Adrenal gland (tissue), 19 donors: ENCODE measurements at regions of chr1 and their contacts with region 1.

Region 1: DNA sequence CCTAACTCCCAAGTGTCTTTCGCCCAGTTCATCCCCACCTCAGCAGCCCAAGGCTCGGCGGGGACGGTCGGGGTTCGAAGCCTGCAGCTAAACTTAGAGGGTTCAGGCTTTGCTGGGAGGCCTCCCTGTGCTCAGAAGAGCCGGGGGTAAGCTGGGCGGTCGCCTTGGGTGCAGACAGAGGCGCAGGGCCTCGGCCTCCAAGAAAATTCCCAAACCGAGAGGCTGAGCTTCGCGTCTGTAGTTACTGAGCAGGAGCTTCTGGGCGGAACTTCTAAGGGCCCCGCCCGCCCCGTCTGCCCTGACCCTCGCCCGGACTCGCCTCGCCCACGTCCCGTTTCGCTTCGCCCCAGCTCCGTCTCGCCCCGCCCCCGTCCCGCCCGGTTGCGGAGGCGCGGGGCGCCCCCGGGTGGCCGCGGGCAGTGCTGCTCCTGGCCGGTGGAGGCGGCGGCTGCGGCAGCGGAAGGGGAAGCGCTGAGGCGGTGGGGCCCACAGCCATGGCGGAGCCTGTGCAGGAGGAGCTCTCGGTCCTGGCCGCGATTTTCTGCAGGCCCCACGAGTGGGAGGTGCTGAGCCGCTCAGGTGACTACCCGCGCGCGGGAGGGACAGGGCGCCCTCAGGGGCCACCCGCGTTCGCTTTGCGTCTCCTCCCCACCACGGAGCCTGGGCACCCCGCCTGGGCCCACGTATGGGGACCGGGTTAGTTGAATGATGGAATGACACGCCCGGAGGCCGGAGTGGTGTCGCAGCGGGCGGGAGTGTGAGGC is at the start of gene RWDD3:
- DNase-seq: peak; percentile 92 to 95 (median 94)
- H3K4me3 ChIP-seq: peak within 1 kb of the TSS; percentile 78 to 96 (median 87)
- H3K27ac ChIP-seq: peak within 1 kb of the TSS; percentile 20 to 90 (median 78)
- H3K4me1 ChIP-seq: peaks cover 0 to 41% of the 10 kb centered on the region in 2 donors
- H3K27me3 ChIP-seq: no peaks in the 10 kb centered on the region
- CTCF ChIP-seq: peak; percentile 23 to 98 (median 72)
- POLR2A ChIP-seq: peak; percentile 39 to 70
- total RNA-seq, gene RWDD3: 2.9 to 29.3 (median 12.0) TPM

Region 2: GRCh38 chr1:95072532-95073419 is 161.1 kb before region 1 on chr1 and contains the start of gene ALG14:
- intact Hi-C with region 1: loop called in 1 of 2 experiments (anchors 5 kb)
- DNase-seq: peak; percentile 95 to 98 (median 96)
- H3K4me3 ChIP-seq: peak within 1 kb of the TSS; percentile 4 to 88 (median 55)
- H3K27ac ChIP-seq: peak within 1 kb of the TSS; percentile 55 to 96 (median 81)
- H3K4me1 ChIP-seq: peaks cover 3 to 14% of the 10 kb centered on the region in 2 donors
- H3K27me3 ChIP-seq: no peaks in the 10 kb centered on the region
- CTCF ChIP-seq: no peak
- POLR2A ChIP-seq: peak; percentile 80 to 90
- total RNA-seq, gene ALG14: 2.2 to 24.3 (median 14.9) TPM

Region 3: DNA sequence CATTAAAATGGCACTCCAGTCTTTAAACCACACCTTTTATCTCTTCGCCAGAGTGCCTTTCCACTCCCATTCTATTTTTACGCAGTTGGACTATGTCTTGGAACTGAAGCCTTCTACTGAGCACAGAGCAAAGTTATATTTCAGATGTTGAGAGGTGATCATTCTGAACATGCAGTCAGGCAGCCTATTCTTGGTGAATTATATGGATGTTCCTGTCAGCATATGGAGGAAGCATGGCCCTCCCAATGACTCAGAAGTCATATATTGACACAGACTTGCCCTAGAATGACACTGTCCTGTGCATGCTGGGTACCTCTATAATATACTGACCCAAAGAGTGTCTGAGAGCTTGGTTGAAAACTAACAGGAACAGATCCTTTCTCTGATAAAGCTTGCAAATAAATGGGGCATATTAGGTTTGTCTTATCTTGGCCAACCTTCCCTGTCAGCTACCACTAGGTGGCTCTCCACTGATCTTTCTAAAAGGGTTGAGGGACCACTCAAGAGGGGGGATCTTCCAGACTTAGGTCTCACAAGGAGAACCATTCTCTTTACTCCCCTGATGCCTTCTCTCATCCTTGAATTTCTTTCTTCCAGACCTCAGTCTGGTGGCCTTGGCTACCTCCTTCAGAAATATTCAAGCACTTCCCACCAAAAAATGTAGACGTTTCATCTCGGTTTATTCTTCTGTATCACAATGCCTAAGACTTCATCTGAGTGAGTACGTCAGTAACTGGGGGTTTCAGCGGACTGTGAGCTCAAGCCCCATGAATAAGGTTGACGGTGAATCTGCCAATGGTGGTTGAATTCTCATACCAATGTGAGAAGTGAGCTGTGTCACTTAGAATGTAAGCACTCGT is 149.4 kb before region 1 on chr1:
- intact Hi-C with region 1: loop called in 1 of 2 experiments (anchors 10 kb)
- DNase-seq: no peak
- H3K4me3 ChIP-seq: no peak overlapping the region
- H3K27ac ChIP-seq: no peak overlapping the region
- H3K4me1 ChIP-seq: peaks cover 10 to 13% of the 10 kb centered on the region in 2 donors
- H3K27me3 ChIP-seq: no peaks in the 10 kb centered on the region
- CTCF ChIP-seq: peak; percentile 22 to 63 (median 47)
- POLR2A ChIP-seq: no peak

Region 4: DNA sequence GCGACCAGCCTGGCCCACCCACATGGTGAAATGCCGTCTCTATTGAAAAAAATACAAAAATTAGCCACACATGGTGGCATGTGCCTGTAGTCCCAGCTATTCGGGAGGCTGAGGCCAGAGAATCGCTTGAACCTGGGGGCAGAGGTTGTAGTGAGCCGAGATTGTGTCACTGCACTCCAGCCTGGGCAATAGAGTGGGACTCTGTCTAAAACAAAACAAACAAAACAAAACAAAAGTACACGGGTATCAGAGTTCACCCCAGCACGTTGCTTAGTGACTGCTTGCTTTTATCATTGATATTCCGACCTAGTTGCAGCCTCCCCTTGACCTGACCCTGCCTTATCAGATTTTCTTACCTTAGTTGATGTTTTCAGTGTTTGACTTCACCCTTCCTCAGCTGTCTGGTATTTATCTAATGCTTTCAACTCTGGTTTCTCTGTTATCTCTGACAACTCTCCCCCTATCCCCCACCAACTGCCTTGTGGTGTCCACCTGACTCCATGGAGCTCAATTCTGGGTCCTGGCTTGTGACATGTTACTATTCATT is 111.7 kb before region 1 on chr1:
- intact Hi-C with region 1: loop called in 1 of 2 experiments (anchors 10 kb)
- DNase-seq: no peak
- H3K4me3 ChIP-seq: no peak overlapping the region
- H3K27ac ChIP-seq: no peak overlapping the region
- H3K4me1 ChIP-seq: peaks cover 0 to 4% of the 10 kb centered on the region in 2 donors
- H3K27me3 ChIP-seq: no peaks in the 10 kb centered on the region
- CTCF ChIP-seq: no peak
- POLR2A ChIP-seq: no peak

Region 5: GRCh38 chr1:95340061-95340460 is 106.1 kb after region 1 on chr1:
- intact Hi-C with region 1: no loop called
- DNase-seq: no peak
- H3K4me3 ChIP-seq: no peak overlapping the region
- H3K27ac ChIP-seq: no peak overlapping the region
- H3K4me1 ChIP-seq: no peaks in the 10 kb centered on the region
- H3K27me3 ChIP-seq: no peaks in the 10 kb centered on the region
- CTCF ChIP-seq: no peak
- POLR2A ChIP-seq: no peak